Tibial artery (tissue), 4 donors: ENCODE measurements at regions of chr6 and their contacts with region 1.

Region 1: DNA sequence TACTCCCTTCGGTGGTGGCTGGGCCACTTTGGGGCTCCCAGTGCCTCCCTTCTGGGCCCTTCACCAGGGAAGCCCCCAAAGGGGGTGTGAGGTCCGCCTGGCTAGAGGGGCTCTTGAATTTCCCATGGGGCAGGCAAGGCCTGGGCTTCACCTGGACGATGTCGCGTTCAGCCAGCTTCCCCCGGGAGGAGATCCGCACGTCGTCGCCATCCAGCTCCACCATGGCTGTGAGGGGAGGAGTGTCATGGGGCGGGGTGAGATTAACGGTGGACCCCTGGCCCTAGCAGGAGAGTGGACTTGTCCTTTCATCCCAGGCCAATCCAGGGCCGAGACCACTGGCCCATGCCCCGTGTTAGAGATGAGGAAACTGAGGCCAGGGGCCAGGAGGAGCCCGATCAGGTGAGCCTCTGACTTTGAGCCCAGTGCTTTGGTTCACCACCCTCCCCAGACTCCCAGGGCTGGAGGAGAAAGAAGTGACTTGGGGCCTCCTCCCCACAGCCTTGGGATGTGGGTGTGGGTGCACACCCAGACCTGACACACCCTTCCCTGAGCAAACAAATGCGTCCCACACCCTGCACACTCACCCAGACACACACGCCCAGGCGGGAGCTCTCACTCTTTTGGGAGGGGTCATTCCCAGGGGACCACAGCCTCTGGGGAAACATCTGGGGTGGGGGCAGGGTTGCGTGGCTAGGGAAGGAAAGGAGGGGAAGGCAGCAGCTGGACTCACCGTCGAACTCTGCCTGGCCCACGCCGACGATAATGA is 46.1 kb downstream of the RAB44 start:
- DNase-seq: no peak
- H3K4me3 ChIP-seq: no peak overlapping the region
- H3K27ac ChIP-seq: no peak overlapping the region
- H3K4me1 ChIP-seq: no peaks in the 10 kb centered on the region
- H3K27me3 ChIP-seq: peaks cover 0 to 2% of the 10 kb centered on the region in 2 donors
- CTCF ChIP-seq: no peak

Region 2: DNA sequence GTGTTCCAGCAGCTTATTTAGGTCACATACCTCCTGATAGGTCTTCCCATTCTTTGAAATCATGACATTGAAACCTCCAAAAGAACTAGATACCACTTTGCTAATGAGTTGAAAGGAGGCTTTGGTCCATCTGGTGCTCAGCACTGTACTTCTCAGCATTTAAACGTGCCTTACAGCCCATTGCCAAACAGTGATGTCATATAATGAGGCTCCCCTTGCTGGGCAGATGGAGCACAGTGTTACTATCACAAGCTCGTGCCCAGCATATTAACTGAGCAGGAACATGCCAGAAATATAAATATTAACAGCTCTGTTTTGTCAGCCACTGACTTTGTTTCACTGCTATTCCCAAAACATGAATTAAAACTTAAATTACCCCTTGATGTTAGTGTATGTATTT is 638.9 kb before region 1 on chr6:
- intact Hi-C with region 1: no loop called
- DNase-seq: no peak
- H3K4me3 ChIP-seq: no peak overlapping the region
- H3K27ac ChIP-seq: no peak overlapping the region
- H3K4me1 ChIP-seq: no peaks in the 10 kb centered on the region
- H3K27me3 ChIP-seq: no peaks in the 10 kb centered on the region
- CTCF ChIP-seq: no peak

Region 3: GRCh38 chr6:36289281-36289878 is 454.3 kb before region 1 on chr6:
- intact Hi-C with region 1: no loop called
- DNase-seq: no peak
- H3K4me3 ChIP-seq: no peak overlapping the region
- H3K27ac ChIP-seq: no peak overlapping the region
- H3K4me1 ChIP-seq: no peaks in the 10 kb centered on the region
- H3K27me3 ChIP-seq: peaks cover 0 to 47% of the 10 kb centered on the region in 2 donors
- CTCF ChIP-seq: no peak

Region 4: DNA sequence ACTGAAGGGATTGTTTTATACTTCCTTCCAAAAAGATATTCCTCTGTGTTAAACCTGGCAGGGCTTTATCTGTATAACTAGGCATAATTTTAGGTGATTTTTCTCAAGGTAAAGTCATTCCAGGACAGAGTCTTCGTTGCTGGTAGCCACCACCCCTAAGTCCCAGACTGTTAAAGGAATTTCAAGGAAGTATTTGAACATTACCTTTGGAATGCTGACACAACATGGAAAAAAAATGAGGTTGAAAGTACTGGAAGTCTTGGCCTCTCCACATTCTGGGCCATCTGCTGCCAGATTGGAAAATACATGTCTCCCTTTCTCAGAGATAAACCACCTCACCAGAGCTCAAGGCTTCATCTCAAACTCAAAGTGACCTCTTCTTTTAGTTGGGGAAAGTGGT is 329.2 kb before region 1 on chr6:
- intact Hi-C with region 1: loop called (anchors 10 kb)
- DNase-seq: no peak
- H3K4me3 ChIP-seq: no peak overlapping the region
- H3K27ac ChIP-seq: no peak overlapping the region
- H3K4me1 ChIP-seq: no peaks in the 10 kb centered on the region
- H3K27me3 ChIP-seq: no peaks in the 10 kb centered on the region
- CTCF ChIP-seq: no peak